HEK293 (cell line): ENCODE measurements at regions of chr17 and their contacts with region 1.

Region 1: DNA sequence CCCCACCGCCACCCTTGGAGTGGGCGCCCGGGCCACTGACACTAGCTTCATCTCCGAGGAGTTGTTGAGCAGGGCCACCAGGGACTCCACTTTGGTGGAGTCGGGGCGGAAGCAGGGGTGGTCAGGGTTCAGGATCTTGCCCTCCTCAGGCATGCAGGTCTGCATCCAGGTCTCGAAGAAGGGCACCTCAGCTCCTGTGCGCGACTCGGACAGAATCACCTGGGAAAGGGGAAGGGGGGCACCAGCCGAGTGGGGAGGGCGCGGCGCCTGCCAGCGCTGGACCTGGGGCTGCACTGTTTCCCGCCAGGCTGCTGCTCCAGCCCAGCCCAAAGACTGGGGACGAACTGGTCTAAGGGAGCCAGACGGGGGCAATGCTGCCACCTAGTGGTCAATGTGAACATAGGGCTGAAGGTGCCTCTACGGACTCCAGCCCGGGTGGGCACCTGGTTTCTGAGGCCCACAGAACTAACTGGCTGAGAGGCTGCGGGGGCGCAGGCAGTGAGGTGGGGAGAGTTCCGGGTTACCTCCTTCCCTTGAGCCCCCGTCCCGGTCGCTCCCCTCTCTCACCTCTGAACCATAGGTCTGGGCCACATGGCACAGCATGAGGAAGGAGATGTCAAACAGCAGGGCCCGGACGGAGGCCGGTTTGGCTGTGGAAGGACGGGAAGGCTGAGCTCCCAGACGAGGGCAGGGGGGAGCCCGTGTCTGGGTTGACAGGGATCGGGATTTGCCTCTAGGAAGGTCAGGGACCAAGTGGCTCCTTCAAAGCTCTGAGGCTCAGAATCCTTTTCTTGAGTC is 11.8 kb downstream of the CSF3 start:
- H3K4me3 ChIP-seq: no peak overlapping the region
- H3K27ac ChIP-seq: no peak overlapping the region
- H3K4me1 ChIP-seq: peaks cover 16% of the 10 kb centered on the region
- CTCF ChIP-seq: peak; percentile 82

Region 2: GRCh38 chr17:40062329-40063186 is 35.5 kb after region 1 on chr17 and contains the start of gene THRA:
- CTCF ChIA-PET with region 1: interaction called, 14 read pairs
- POLR2A ChIA-PET with region 1: interaction called, 4 read pairs
- H3K4me3 ChIP-seq: peak within 1 kb of the TSS; percentile 84
- H3K27ac ChIP-seq: peak within 1 kb of the TSS; percentile 86; the same call in 1 of the 2 replicates
- H3K4me1 ChIP-seq: peaks cover 17% of the 10 kb centered on the region
- CTCF ChIP-seq: no peak

Region 3: GRCh38 chr17:40068917-40069750 is 42.1 kb after region 1 on chr17:
- CTCF ChIA-PET with region 1: interaction called, 154 read pairs
- POLR2A ChIA-PET with region 1: no interaction called
- H3K4me3 ChIP-seq: no peak overlapping the region
- H3K27ac ChIP-seq: no peak overlapping the region; the same call in 1 of the 2 replicates
- H3K4me1 ChIP-seq: peaks cover 49% of the 10 kb centered on the region
- CTCF ChIP-seq: no peak

Region 4: DNA sequence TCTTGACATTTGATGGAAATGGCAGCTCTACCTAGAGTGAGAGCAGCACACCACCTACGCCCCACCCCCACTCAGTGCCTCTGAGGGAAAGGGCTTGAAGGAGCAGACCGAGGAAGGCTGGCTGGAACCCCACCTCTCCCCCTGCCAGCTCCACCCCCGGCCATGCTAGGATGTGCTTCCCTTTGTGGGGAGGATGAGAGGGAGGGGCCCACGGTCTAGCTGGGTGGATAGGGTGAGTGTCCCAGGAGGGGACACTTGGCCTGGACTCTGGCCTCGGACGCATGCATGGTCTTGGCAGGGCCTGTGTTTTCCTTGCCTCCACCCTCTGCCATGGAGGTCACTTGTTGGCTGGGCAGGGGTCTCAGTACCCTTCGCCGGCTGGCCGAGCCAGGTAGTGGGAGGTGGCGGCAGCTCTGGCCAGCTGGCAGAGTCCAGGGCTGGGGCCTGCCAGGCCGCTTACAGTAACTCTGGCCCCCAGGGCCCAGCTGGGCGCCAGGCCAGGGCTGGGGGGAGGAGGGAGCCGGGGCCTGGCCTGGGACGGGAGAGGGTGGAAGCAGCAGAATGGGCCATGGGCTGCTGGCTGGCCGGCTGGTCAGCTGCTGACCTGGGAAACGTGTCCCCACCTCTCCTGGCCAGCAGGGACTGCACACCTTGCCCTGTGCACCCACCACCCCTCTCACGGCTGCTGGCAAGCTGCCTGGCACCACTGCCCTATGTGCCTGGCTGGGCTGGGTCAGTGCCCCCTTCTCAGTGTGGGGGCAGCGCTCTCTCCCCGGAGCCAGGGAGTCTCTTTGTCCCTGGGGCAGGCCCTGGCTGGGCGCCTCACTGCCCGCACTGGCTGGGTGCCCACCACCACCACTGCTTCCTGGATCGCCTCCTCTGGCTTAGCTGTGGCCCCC is 305.0 kb after region 1 on chr17:
- CTCF ChIA-PET with region 1: no interaction called
- POLR2A ChIA-PET with region 1: no interaction called
- H3K4me3 ChIP-seq: no peak overlapping the region
- H3K27ac ChIP-seq: no peak overlapping the region
- H3K4me1 ChIP-seq: peaks cover 20% of the 10 kb centered on the region
- CTCF ChIP-seq: no peak